MCF 10A (cell line): ENCODE measurements at regions of chr1 and their contacts with region 1.

Region 1: DNA sequence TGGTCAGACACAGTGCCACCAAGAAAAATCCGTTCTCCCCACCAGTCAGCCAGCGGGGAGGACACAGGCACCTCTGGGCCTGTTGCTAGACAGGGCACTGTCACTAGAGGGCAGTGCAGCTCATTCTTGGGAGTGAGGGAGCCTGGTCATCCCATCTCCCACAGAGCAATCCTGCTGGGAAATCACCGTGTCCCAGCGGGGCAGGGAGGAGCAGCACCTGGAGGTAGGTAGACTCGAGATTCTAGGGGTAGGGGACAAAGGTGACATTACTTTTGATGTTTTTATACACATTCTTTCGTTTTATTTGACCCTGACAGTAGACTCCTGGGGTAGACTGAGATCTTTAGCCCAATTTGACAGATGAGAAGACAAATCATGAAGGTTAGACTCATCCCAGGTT is 6.7 kb upstream of the CAMK1G start:
- DNase-seq: peak; percentile 97
- H3K4me3 Mint-ChIP-seq: no peak overlapping the region
- H3K27ac Mint-ChIP-seq: no peak overlapping the region
- H3K4me1 Mint-ChIP-seq: peaks cover 8% of the 10 kb centered on the region
- H3K27me3 Mint-ChIP-seq: peaks cover 19% of the 10 kb centered on the region
- CTCF ChIP-seq: peak; percentile 100

Region 2: DNA sequence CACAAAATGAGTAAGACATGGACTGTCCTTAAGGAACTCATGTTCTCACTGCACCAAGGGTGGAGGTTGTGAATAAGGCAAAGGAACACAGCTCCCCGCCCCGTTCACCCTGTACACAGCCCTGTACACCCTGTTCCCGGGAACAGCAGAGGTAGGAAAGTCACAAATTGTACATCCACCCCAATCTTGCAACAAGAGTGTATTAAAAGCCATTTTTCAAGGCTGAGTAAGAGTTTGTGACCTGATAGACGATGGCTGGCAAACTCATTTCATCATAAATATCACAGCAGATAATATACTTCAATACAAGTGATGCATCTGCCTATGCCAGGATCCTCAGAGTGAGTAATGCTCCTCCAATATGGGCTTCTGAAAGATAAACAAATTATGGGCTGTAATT is 45.8 kb before region 1 on chr1:
- CTCF ChIA-PET with region 1: no interaction called
- POLR2A ChIA-PET with region 1: no interaction called
- intact Hi-C with region 1: no loop called
- DNase-seq: peak; percentile 46
- H3K4me3 Mint-ChIP-seq: peak overlapping the region; percentile 60
- H3K27ac Mint-ChIP-seq: peak overlapping the region; percentile 60
- H3K4me1 Mint-ChIP-seq: peaks cover 74% of the 10 kb centered on the region
- H3K27me3 Mint-ChIP-seq: no peaks in the 10 kb centered on the region
- CTCF ChIP-seq: no peak

Region 3: DNA sequence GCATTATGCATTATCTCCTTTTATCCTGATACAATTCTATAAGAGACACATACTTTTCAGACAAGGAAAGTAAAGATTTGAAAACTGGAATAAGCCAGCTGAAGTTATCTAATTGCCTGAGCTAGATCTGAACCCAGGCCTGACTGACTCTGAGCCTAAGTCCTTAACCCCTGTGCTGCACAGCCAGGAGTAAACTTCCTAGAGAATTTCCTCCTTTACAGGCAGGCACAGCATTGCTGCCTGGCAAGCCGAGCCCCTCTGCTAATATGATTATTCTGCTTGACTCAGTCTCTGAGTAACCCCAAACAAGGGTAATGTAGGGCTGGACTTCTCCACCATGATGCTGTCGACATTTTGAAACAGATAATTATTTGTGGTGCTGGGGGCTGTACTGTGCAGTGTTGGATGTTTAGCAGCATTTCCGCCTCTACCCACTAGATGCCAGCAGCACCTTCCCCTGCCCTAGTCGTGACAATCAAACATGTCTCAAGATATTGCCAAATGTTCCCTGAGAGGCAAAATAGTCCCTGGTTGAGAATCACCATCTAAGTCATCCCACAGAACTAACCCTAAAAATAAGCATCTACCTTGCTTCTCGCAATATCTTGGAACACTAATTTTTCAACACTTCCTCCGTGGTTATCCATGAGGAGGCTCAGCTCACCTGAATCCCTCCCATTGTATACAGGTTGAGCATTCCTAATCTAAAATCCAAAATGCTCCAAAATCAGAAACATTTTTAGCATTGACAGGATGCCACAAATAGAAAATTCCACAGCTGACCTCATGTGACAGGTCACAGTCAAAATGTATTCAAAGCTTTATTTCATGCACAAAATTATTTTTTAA is 25.2 kb after region 1 on chr1:
- CTCF ChIA-PET with region 1: interaction called, 198 read pairs
- POLR2A ChIA-PET with region 1: interaction called, 4 read pairs
- intact Hi-C with region 1: loop called (anchors 2 kb)
- DNase-seq: peak; percentile 90
- H3K4me3 Mint-ChIP-seq: no peak overlapping the region
- H3K27ac Mint-ChIP-seq: no peak overlapping the region
- H3K4me1 Mint-ChIP-seq: no peaks in the 10 kb centered on the region
- H3K27me3 Mint-ChIP-seq: no peaks in the 10 kb centered on the region
- CTCF ChIP-seq: peak; percentile 92

Region 4: GRCh38 chr1:209643285-209644020 is 66.7 kb after region 1 on chr1:
- CTCF ChIA-PET with region 1: interaction called, 23 read pairs
- POLR2A ChIA-PET with region 1: no interaction called
- intact Hi-C with region 1: no loop called
- DNase-seq: peak; percentile 61
- H3K4me3 Mint-ChIP-seq: peak overlapping the region; percentile 24
- H3K27ac Mint-ChIP-seq: peak overlapping the region; percentile 68
- H3K4me1 Mint-ChIP-seq: peaks cover 69% of the 10 kb centered on the region
- H3K27me3 Mint-ChIP-seq: no peaks in the 10 kb centered on the region
- CTCF ChIP-seq: no peak

Region 5: DNA sequence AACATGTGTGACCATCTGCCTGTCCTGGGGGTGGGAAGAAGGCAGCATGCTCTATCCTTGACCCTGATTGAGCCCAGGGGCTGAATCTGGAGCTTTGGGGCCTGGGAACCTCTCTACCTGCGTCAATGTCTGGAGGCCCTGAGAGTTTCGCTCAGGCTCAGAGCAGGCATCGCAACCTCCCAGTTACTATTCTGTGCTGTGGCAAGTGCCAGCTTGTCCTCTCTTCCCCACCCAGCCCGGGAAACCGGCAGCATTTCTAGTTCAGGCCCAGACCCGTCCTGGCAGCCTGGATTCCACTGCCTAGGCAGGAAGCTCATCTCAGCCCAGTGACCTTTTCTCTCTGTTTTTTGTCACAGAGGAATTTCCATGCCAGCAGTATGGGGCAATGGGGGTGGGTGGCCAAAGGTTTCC is 239.1 kb after region 1 on chr1:
- CTCF ChIA-PET with region 1: interaction called, 12 read pairs
- POLR2A ChIA-PET with region 1: interaction called, 3 read pairs
- intact Hi-C with region 1: no loop called
- DNase-seq: peak; percentile 100
- H3K4me3 Mint-ChIP-seq: peak overlapping the region; percentile 44
- H3K27ac Mint-ChIP-seq: peak overlapping the region; percentile 91
- H3K4me1 Mint-ChIP-seq: peaks cover 29% of the 10 kb centered on the region
- H3K27me3 Mint-ChIP-seq: no peaks in the 10 kb centered on the region
- CTCF ChIP-seq: no peak